Colonic mucosa (tissue), 4 donors: ENCODE measurements at regions of chr3 and their contacts with region 1.

Region 1: DNA sequence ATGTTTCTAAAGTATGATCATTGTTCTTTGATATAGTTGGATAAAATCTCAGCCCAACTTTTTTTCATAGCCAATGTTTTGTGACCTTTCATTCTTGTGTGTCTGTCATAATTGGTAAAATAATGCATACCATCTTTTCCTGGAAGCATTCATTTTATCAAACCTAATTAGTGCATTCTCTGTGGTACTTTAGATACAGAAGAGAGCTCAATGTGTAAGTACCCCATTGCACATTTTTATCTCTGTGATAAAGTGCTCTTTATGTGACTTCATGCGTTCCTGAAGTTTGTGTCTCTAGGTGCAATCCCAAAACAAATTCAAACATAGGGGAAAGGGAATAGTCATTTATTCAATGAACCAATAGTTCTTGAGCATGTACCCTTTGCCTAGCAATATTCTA is 628.5 kb downstream of the GBE1 start:
- DNase-seq: no peak
- H3K4me3 ChIP-seq: no peak overlapping the region
- H3K27ac ChIP-seq: no peak overlapping the region
- H3K4me1 ChIP-seq: no peaks in the 10 kb centered on the region
- H3K27me3 ChIP-seq: no peaks in the 10 kb centered on the region
- CTCF ChIP-seq: no peak

Region 2: GRCh38 chr3:81041331-81041730 is 91.7 kb before region 1 on chr3:
- intact Hi-C with region 1: loop called (anchors 5 kb)
- DNase-seq: no peak
- H3K4me3 ChIP-seq: no peak overlapping the region
- H3K27ac ChIP-seq: no peak overlapping the region
- H3K4me1 ChIP-seq: no peaks in the 10 kb centered on the region
- H3K27me3 ChIP-seq: no peaks in the 10 kb centered on the region
- CTCF ChIP-seq: no peak